ENCODE measurements at regions of chr1 and their contacts with region 1.

Region 1: GRCh38 chr1:151106894-151107293 is 36.3 kb downstream of the GABPB2 start:
- DNase-seq: no peak
- H3K4me3 ChIP-seq: no peak overlapping the region
- H3K4me3 Mint-ChIP-seq: no peak overlapping the region
- H3K27ac ChIP-seq: no peak overlapping the region
- H3K27ac Mint-ChIP-seq: peak overlapping the region in 1 of 7 donors; percentile 31
- H3K4me1 ChIP-seq: no peaks in the 10 kb centered on the region
- H3K4me1 Mint-ChIP-seq: no peaks in the 10 kb centered on the region
- H3K27me3 ChIP-seq: no peaks in the 10 kb centered on the region
- H3K27me3 Mint-ChIP-seq: no peaks in the 10 kb centered on the region

Region 2: GRCh38 chr1:151175910-151176309 is 69.0 kb after region 1 on chr1 and contains the start of gene TMOD4:
- CTCF ChIA-PET with region 1: interaction called, 13 read pairs
- POLR2A ChIA-PET with region 1: no interaction called
- intact Hi-C with region 1: no loop called
- DNase-seq: no peak
- H3K4me3 ChIP-seq: no peak within 1 kb of the TSS
- H3K4me3 Mint-ChIP-seq: peak within 1 kb of the TSS in 1 of 8 donors; percentile 20
- H3K27ac ChIP-seq: no peak within 1 kb of the TSS
- H3K27ac Mint-ChIP-seq: peak within 1 kb of the TSS in 6 of 7 donors; percentile 7 to 78 (median 48)
- H3K4me1 ChIP-seq: no peaks in the 10 kb centered on the region
- H3K4me1 Mint-ChIP-seq: peaks cover 0 to 2% (median under 1%) of the 10 kb centered on the region in 4 donors
- H3K27me3 ChIP-seq: no peaks in the 10 kb centered on the region
- H3K27me3 Mint-ChIP-seq: no peaks in the 10 kb centered on the region
- total RNA-seq, gene TMOD4: 6.4 TPM

Measured in CD4-positive, alpha-beta memory T cell (primary cell).